ENCODE measurements at regions of chr5 and their contacts with region 1.

Region 1: DNA sequence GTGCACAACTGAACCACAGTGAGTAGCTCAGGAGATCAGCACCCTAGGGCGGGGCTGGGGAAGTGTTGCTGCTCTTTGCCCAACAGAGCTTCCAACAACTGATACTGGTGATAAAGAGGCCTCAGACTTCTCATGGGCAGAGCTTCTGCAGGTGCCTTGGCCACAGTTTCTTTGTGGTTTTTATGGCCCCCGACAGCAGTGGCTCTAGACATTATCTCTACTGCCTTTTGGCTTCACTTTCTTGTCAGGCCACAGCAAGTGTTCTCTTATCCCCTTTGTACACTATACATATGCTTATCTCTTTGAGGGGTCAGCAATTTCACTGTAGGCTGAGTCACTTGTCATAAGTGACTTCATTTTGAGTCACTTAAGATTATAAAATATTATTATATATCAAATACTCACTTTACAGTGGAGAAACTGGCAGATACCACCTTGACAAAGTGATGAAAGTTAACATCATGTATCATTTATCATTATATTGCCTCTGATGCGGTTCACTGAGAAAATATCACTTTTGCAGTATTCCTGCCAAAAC is 90.9 kb upstream of the COX7C start:
- DNase-seq: no peak
- H3K4me3 ChIP-seq: no peak overlapping the region
- H3K27ac ChIP-seq: no peak overlapping the region
- H3K4me1 ChIP-seq: no peaks in the 10 kb centered on the region
- H3K27me3 ChIP-seq: no peaks in the 10 kb centered on the region
- CTCF ChIP-seq: no peak

Region 2: DNA sequence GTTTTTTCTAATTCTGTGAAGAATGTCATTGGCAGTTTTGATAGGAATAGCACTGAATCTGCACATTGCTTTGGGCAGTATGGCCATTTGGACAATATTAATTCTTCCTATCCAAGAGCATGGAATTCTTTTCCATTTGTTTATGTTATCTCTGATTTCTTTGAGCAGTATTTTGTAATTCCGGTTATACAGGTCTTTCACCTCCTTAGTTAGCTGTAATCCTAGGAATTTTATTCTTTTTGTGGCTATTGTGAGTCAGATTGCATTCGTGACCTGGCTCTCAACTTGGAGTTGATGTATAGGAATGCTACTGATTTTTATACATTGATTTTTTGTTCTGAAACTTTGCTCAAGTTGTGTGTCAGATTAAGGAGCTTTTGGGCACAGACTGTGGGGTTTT is 1717.8 kb after region 1 on chr5:
- intact Hi-C with region 1: loop called (anchors 5 kb)
- DNase-seq: no peak
- H3K4me3 ChIP-seq: no peak overlapping the region
- H3K27ac ChIP-seq: no peak overlapping the region
- H3K4me1 ChIP-seq: no peaks in the 10 kb centered on the region
- H3K27me3 ChIP-seq: no peaks in the 10 kb centered on the region
- CTCF ChIP-seq: no peak

Measured in tibial artery (tissue), 4 donors.